Left ventricle myocardium inferior (tissue), 1 donor: ENCODE measurements at regions of chr17 and their contacts with region 1.

Region 1: GRCh38 chr17:7989781-7990655 is 12.4 kb upstream of the GUCY2D start:
- DNase-seq: peak; percentile 82
- H3K4me3 ChIP-seq: peak overlapping the region; percentile 69
- H3K27ac ChIP-seq: peak overlapping the region; percentile 16
- H3K4me1 ChIP-seq: peaks cover 10% of the 10 kb centered on the region
- H3K27me3 ChIP-seq: peaks cover 26% of the 10 kb centered on the region
- CTCF ChIP-seq: peak; percentile 97

Region 2: GRCh38 chr17:7745748-7746470 is 244.1 kb before region 1 on chr17:
- intact Hi-C with region 1: loop called (anchors 10 kb)
- DNase-seq: no peak
- H3K4me3 ChIP-seq: no peak overlapping the region
- H3K27ac ChIP-seq: no peak overlapping the region
- H3K4me1 ChIP-seq: peaks cover 10% of the 10 kb centered on the region
- H3K27me3 ChIP-seq: peaks cover 18% of the 10 kb centered on the region
- CTCF ChIP-seq: no peak

Region 3: GRCh38 chr17:7862692-7863437 is 127.2 kb before region 1 on chr17:
- intact Hi-C with region 1: loop called (anchors 10 kb)
- DNase-seq: peak; percentile 20
- H3K4me3 ChIP-seq: no peak overlapping the region
- H3K27ac ChIP-seq: no peak overlapping the region
- H3K4me1 ChIP-seq: peaks cover 17% of the 10 kb centered on the region
- H3K27me3 ChIP-seq: no peaks in the 10 kb centered on the region
- CTCF ChIP-seq: peak; percentile 83

Region 4: GRCh38 chr17:7912927-7913524 is 77.0 kb before region 1 on chr17:
- intact Hi-C with region 1: loop called (anchors 5 kb)
- DNase-seq: no peak
- H3K4me3 ChIP-seq: no peak overlapping the region
- H3K27ac ChIP-seq: no peak overlapping the region
- H3K4me1 ChIP-seq: peaks cover 37% of the 10 kb centered on the region
- H3K27me3 ChIP-seq: no peaks in the 10 kb centered on the region
- CTCF ChIP-seq: peak; percentile 82